HEK293T (cell line): ENCODE measurements at regions of chr3 and their contacts with region 1.

Region 1: DNA sequence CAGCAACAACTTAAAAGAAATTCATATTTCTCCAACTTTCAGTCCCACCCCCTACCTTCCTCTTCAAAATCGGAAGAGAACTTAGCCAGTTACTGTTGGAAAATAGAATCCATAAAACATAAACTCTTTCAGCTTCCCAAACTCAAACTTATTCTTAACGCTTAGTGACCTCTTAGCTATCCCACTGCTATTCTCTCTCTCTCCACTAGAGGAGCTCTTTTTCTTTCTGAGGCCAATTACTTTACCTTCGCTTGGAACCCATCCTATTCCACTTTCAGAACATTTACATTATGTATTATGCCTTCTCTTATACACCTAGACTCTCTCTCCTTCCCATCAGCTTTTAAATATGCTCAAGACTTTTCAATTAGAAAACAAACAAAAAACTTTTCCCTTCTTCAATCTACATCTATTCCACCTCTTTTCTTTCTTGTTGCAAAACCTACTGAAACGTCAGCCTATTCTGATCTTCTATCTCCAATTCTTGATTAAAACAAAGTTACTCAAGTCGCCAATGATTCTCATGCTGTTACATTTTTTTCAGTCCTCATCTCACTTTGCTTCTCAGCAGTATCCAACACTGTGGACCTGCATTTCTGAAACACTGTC is 13.4 kb upstream of the GHSR start:
- DNase-seq: peak; percentile 60

Region 2: DNA sequence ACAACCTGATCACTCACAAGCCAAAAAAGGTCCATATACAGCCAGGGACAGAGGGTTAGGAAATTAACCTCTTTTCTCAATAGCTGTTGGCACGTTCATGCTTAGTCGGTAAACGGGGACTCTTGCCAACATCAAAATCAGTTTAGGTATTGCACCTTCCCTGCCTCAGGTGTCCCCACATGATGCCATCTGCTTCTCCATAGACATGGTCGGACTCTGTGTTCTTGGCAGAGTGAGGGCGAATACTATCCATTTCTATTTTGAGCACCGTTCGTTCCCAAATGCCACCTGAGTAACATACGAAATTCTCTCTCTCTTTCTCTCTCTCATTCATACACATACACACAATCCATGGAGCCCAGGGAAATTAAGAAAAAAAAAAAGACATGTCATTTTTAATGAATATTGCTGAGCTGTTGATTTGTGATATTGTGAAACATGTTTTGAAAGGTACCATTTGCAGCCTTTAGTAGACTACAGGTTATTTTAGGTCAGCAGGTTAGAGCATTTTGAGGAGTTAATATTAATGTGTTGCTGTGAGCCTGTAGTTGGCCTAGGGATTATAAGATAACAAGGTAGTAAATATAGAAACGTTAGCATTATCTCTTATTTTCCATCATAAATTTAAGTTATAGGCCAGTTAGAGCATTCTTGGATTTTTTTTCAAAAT is 91.9 kb before region 1 on chr3:
- CTCF ChIA-PET with region 1: no interaction called
- POLR2A ChIA-PET with region 1: no interaction called
- DNase-seq: no peak

Region 3: GRCh38 chr3:172476347-172476746 is 14.7 kb after region 1 on chr3:
- CTCF ChIA-PET with region 1: interaction called, 13 read pairs
- POLR2A ChIA-PET with region 1: no interaction called
- DNase-seq: no peak